Left colon (tissue), 2 donors: ENCODE measurements at regions of chr2 and their contacts with region 1.

Region 1: DNA sequence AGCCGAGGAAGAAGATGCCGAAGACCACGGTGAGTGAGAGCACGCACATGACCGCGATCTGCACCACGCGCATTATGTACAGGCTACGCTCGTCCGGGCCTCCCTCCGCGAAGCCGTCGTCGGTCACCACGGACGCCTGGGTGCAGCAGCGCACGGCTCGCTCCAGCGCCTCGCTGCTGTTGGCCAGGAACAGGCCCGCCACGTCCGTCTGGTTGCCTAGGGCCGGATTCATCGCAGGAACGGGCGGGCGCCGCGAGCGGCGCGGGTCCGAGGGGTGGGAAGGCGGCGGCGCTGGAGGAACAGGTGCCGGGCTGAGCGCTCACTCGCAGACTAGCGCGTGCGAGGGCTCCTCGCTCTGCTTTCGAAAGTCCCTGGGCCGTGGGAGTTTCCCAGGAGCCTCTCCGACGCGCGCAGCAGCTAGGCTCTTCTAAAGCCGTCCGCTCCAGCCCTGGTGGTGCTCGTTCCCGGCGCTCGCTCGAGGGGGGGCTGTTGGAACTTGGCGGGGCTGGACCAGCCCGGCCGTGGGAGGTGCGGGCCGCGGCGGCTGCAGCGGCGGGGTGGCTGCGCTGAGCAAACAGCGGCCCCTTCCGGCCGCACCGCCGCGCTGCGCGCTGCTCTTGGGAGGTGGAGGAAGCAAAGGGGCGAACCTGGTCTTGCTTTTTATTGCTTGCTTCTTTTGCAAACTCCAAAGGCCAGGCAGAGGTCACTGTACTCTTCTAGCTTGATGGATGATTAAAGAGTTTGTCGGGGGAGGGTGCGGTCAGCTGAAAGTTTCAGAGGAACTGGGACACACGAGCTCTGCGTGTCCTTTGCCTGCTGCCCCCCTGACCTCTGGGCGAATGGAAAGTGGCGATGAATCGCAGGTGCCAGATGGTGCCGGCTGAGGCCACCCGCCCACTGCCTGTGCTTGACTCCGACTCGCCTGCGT is at the start of gene RPRM:
- DNase-seq: peak; percentile 70 to 73
- ATAC-seq: peak; percentile 97
- total RNA-seq, gene RPRM: 0.98 TPM in 1 of 2 donors, not detected in the other

Region 2: DNA sequence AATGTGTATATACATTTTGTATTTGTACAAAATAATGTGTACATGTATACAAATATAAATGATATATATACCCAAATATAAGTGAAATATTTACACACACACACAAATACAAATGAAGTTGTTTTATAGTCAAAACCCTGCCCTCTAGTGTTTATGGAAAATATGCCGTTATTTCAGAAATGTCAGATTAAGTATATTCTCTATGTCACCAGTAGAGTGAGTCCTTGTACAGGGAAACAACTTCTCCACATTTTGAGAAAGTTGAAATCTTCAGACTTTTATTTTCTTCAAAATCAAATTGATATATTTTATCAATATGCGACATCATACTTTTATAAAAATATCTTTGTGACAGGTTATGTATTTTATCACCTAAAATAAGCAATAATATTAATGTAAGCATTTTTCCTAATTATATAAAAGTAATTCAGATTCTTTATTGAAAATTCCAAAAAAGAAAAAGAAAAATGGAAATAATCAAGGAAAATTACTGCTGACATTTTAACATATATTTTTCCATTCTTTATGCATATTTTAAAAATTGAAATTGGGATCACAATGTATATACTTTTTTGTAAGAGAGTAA is 737.8 kb before region 1 on chr2:
- intact Hi-C with region 1: loop called in 1 of 2 experiments (anchors 10 kb)
- DNase-seq: no peak
- ATAC-seq: peak; percentile 71

Region 3: DNA sequence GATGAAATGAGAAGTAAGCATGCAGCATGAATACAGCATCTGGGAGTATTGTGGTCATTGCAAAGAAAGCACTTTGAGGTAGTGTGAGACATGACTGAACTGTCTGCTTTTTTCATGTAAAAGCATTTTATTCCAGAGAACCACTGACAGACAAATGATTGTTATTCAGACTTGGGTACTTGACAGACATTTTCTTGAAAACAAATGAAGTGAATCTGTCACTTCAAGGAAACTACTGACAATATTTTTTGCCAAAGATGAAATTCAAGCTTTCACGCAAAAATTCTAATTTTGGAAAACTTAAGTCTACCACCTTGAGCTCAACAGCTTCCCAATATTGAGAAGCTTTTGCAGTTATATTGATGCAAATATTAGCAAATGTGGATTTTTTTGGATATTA is 504.5 kb before region 1 on chr2:
- intact Hi-C with region 1: no loop called
- DNase-seq: no peak
- ATAC-seq: no peak

Region 4: GRCh38 chr2:153163058-153163457 is 315.5 kb before region 1 on chr2:
- intact Hi-C with region 1: loop called in 1 of 2 experiments (anchors 10 kb)
- DNase-seq: no peak
- ATAC-seq: no peak

Region 5: GRCh38 chr2:153277541-153277940 is 201.1 kb before region 1 on chr2:
- intact Hi-C with region 1: no loop called
- DNase-seq: no peak
- ATAC-seq: no peak

Region 6: DNA sequence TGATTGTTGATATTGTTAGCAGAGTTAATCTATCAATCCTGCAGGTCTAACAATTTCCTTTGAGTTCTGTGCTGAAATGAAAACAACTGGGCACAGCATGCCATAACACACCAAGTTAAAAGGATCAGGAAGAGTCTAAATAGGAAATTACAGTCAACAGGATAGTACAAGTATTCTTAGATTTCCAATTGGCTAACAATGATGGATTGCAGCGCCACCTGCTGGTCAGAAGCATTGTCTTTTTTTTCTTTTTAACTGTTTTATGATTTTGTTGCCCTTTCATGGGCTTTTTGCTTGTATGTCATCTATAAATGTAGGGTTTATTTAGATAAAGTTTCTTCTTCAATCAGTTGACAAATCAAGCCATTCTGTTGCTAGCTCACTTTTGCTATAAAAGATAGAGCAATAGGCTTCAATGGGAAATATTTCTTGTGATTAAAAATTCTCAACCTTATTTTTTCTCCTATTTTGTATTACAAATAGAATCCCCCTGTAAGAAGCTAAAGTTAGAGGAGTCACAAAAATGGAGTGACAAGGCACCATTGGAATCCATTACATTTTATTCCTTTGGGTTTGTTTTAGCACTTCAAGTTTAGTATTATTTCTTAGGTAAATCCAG is 40.8 kb after region 1 on chr2:
- intact Hi-C with region 1: loop called in 1 of 2 experiments (anchors 2 kb)
- DNase-seq: peak in 1 of 2 donors; percentile 74
- ATAC-seq: no peak